H1 (cell line): ENCODE measurements at regions of chr7 and their contacts with region 1.

Region 1: GRCh38 chr7:105769901-105770628 is 106.3 kb downstream of the ATXN7L1 start:
- DNase-seq: no peak
- H3K4me3 ChIP-seq: no peak overlapping the region
- H3K27ac ChIP-seq: no peak overlapping the region
- H3K4me1 ChIP-seq: peaks cover 11 to 23% (median 19%) of the 10 kb centered on the region in 4 experiments
- H3K27me3 ChIP-seq: no peaks in the 10 kb centered on the region
- CTCF ChIP-seq: no peak
- EP300 ChIP-seq: no peak
- POLR2A ChIP-seq: no peak
- RAD21 ChIP-seq: no peak

Region 2: DNA sequence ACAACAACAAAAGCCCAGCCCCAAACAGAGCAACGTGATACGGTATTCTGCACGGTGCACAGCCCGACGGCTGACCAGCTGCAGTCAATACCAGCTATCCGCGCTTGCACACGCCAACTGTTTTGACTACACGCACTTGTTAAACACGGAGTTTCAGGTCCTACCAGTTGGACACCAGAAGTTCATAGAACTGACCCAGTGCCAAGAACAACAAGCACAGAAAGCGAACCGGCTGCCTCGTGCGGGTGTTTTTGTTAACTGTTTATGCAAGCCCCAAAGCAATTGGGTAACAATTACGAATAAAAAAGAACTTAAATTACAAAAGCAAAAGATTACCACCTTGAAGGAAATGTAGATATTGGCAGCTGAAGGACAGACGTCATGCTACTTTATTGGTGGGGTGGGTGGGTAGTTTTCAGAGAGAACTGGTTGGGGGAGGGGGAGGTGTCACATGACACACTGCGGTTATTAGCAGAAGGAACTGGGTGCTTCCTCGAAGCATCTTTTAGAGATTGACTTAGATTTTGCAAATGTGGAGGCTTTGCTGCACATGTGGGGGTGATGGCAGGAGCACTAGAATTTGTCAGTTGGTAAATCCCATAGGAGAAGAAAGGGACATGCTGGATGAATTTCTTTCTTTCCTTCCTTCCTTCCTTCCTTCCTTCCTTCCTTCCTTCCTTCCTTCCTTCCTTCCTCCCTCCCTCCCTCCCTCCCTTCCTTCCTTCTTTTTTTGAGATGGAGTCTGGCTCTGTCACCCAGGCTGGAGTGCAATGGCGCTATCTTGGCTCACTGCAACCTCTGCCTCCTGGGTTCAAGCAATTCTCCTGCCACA is 78.1 kb before region 1 on chr7:
- CTCF ChIA-PET with region 1: interaction called, 34 read pairs
- POLR2A ChIA-PET with region 1: no interaction called
- DNase-seq: no peak
- H3K4me3 ChIP-seq: peak overlapping the region; percentile 11 to 48 (median 30); a peak in 5 of 8 replicates
- H3K27ac ChIP-seq: peak overlapping the region; percentile 42; the same call in 1 of the 2 replicates
- H3K4me1 ChIP-seq: peaks cover 31 to 48% (median 40%) of the 10 kb centered on the region in 4 experiments
- H3K27me3 ChIP-seq: no peaks in the 10 kb centered on the region
- CTCF ChIP-seq: no peak
- EP300 ChIP-seq: no peak
- POLR2A ChIP-seq: no peak
- RAD21 ChIP-seq: no peak

Region 3: DNA sequence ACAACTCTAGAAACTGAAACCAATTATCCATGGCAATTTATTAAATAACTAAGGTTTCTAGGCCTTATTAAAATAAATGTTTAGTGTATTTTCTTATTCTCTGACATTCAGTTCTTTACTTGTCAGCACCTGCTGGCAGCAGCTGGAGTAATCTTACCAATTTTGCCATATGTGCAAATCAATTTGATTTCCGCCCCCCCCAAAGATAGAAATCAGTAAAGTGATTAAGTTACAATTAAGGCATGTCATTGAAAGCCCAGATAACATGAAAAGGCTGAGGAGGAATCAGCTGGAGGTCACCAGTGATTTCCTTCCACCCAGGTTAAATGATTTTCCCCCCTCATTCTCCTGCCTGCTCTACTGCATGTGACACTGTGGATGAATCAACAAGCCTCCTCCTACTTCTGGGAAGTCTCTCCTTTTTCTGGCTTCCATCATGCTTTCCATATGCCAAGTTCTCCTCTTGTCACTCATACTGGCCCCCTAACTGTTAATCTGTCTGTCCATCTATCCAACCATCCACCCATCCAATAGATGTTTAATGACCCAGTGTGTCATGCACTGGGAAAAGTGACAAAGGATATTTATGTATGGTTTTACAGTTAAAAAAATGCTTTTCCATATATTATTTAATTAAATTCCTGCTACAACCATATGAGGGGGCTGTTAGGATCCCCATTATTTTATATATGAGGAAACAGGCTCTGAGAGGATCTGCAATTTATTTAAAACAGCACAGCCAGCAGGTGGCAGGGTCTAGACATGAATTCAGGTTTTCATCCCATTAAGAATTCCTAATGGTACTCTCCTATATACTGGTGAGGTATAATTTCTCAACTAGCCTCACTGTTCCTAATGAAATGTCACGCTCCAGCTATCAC is 10.2 kb before region 1 on chr7:
- CTCF ChIA-PET with region 1: interaction called, 307 read pairs
- POLR2A ChIA-PET with region 1: interaction called, 4 read pairs
- DNase-seq: no peak
- H3K4me3 ChIP-seq: no peak overlapping the region
- H3K27ac ChIP-seq: no peak overlapping the region
- H3K4me1 ChIP-seq: peaks cover 1 to 13% (median 4%) of the 10 kb centered on the region in 4 experiments; a peak in 4 of 7 replicates
- H3K27me3 ChIP-seq: no peaks in the 10 kb centered on the region
- CTCF ChIP-seq: peak in 2 of 3 experiments; percentile 45 to 47; a peak in 2 of 4 replicates
- EP300 ChIP-seq: no peak
- POLR2A ChIP-seq: no peak
- RAD21 ChIP-seq: peak; percentile 65 to 69

Region 4: GRCh38 chr7:105808703-105809590 is 38.9 kb after region 1 on chr7:
- CTCF ChIA-PET with region 1: interaction called, 39 read pairs
- POLR2A ChIA-PET with region 1: interaction called, 4 read pairs
- DNase-seq: no peak
- H3K4me3 ChIP-seq: no peak overlapping the region
- H3K27ac ChIP-seq: no peak overlapping the region
- H3K4me1 ChIP-seq: peaks cover 6 to 14% (median 9%) of the 10 kb centered on the region in 4 experiments; a peak in 5 of 7 replicates
- H3K27me3 ChIP-seq: no peaks in the 10 kb centered on the region
- CTCF ChIP-seq: no peak
- EP300 ChIP-seq: no peak
- POLR2A ChIP-seq: no peak
- RAD21 ChIP-seq: no peak

Region 5: DNA sequence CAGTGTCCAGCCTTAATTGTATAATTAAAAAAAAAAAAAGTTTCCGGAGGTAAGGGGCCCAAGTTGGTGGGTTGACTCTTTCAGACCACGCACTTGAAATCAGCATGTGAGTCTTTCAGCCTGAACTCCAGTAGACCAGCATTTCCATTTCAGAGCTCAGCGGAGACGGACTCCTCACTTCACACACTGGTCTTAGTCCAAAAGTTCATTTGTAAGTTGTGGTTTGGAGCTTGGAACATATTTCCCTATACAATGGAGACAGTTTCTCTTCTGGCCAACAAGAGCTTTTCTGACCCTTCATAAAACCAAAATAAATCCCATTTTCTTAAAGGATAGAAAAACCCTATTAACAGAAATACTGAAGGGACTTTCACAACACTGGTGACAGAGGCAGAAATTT is 65.4 kb after region 1 on chr7:
- CTCF ChIA-PET with region 1: interaction called, 14 read pairs
- POLR2A ChIA-PET with region 1: no interaction called
- DNase-seq: no peak
- H3K4me3 ChIP-seq: no peak overlapping the region
- H3K27ac ChIP-seq: no peak overlapping the region
- H3K4me1 ChIP-seq: peaks cover 12 to 29% (median 24%) of the 10 kb centered on the region in 4 experiments
- H3K27me3 ChIP-seq: peaks cover 0 to 21% (median 11%) of the 10 kb centered on the region in 4 experiments; a peak in 4 of 7 replicates
- CTCF ChIP-seq: no peak
- EP300 ChIP-seq: no peak
- POLR2A ChIP-seq: no peak
- RAD21 ChIP-seq: no peak

Region 6: DNA sequence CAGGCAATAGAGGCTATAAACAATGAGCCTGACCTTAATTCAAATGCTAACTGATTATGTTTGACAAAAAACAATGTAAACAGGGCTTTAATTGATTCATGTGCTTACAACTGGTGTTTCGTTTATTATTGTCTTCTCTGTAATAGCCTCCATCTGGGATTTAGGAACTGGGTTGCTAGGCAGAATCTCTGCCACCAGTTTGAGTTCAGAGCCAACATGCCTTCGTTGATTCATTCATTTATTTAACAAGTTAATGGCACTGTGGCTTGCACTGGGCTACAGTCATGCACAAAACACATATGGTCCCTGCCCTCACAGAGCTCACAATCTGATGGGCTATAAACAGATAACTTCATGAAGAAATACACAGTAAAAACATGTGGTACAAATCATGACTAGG is 173.4 kb after region 1 on chr7:
- CTCF ChIA-PET with region 1: no interaction called
- POLR2A ChIA-PET with region 1: no interaction called
- DNase-seq: no peak
- H3K4me3 ChIP-seq: no peak overlapping the region
- H3K27ac ChIP-seq: no peak overlapping the region
- H3K4me1 ChIP-seq: peaks cover 0 to 3% (median 0%) of the 10 kb centered on the region in 4 experiments; a peak in 1 of 7 replicates
- H3K27me3 ChIP-seq: no peaks in the 10 kb centered on the region
- CTCF ChIP-seq: no peak
- EP300 ChIP-seq: no peak
- POLR2A ChIP-seq: no peak
- RAD21 ChIP-seq: no peak